GM10248 (cell line): ENCODE measurements at regions of chr6 and their contacts with region 1.

Region 1: GRCh38 chr6:108492131-108492766 is 68.5 kb upstream of the FOXO3 start:
- DNase-seq: peak; percentile 33
- CTCF ChIP-seq: peak; percentile 64

Region 2: GRCh38 chr6:108502832-108503231 is 10.6 kb after region 1 on chr6:
- CTCF ChIA-PET with region 1: interaction called, 18 read pairs
- POLR2A ChIA-PET with region 1: no interaction called
- DNase-seq: no peak
- CTCF ChIP-seq: no peak